Right cardiac atrium (tissue), 5 donors: ENCODE measurements at regions of chr22 and their contacts with region 1.

Region 1: GRCh38 chr22:37328017-37328416 is 45.7 kb downstream of the CYTH4 start:
- DNase-seq: no peak
- ATAC-seq: no peak
- H3K4me3 ChIP-seq: no peak overlapping the region
- H3K27ac ChIP-seq: no peak overlapping the region
- H3K4me1 ChIP-seq: no peaks in the 10 kb centered on the region
- H3K27me3 ChIP-seq: no peaks in the 10 kb centered on the region

Region 2: GRCh38 chr22:37457093-37457893 is 129.3 kb after region 1 on chr22:
- intact Hi-C with region 1: no loop called
- DNase-seq: peak; percentile 58 to 86 (median 80)
- ATAC-seq: peak; percentile 80 to 82
- H3K4me3 ChIP-seq: no peak overlapping the region
- H3K27ac ChIP-seq: no peak overlapping the region
- H3K4me1 ChIP-seq: no peaks in the 10 kb centered on the region
- H3K27me3 ChIP-seq: no peaks in the 10 kb centered on the region

Region 3: GRCh38 chr22:37566903-37567820 is 239.1 kb after region 1 on chr22:
- intact Hi-C with region 1: loop called in 1 of 4 experiments (anchors 10 kb)
- DNase-seq: peak; percentile 75 to 93 (median 93)
- ATAC-seq: peak; percentile 33 to 50
- H3K4me3 ChIP-seq: no peak overlapping the region
- H3K27ac ChIP-seq: peak overlapping the region; percentile 7
- H3K4me1 ChIP-seq: peaks cover 11% of the 10 kb centered on the region
- H3K27me3 ChIP-seq: no peaks in the 10 kb centered on the region